ENCODE measurements at regions of chr17 and their contacts with region 1.

Region 1: GRCh38 chr17:47220531-47220999 is 11.4 kb downstream of the MYL4 start:
- DNase-seq: no peak

Region 2: DNA sequence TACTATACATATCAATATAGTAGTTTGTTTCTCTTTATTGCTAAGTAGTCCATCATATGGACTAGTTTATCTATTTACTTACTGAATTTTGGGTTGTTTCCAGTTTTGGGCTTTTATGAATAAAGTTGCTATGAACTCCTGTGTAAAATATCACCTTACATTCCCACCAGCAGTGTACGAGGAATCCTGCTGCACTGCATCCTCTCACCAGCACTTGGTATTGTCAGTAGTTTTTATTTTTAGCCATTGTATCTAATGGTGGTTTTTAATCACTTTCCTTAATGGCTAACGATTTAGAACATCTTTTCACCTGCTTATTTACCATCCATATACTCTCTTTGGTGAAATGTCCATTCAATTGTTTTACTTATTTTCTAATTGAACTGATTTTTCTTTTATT is 55.4 kb before region 1 on chr17:
- intact Hi-C with region 1: no loop called
- DNase-seq: no peak

Region 3: GRCh38 chr17:47176438-47176837 is 44.1 kb before region 1 on chr17:
- intact Hi-C with region 1: no loop called
- DNase-seq: no peak

Region 4: GRCh38 chr17:47188876-47189731 is 31.5 kb before region 1 on chr17 and contains the start of gene CDC27:
- intact Hi-C with region 1: loop called (anchors 5 kb)
- DNase-seq: peak; percentile 99
- total RNA-seq, gene CDC27: 81.2 TPM

Region 5: GRCh38 chr17:47649153-47649971 is 428.8 kb after region 1 on chr17 and contains the start of gene KPNB1:
- intact Hi-C with region 1: no loop called
- DNase-seq: peak; percentile 100
- total RNA-seq, gene KPNB1: 185 TPM

Measured in cardiac septum (tissue), 1 donor.